Activated naive CD4-positive, alpha-beta T cell treated with anti-CD3 and anti-CD28 coated beads for 36 hours (primary cell): ENCODE measurements at regions of chr4 and their contacts with region 1.

Region 1: GRCh38 chr4:70863099-70863790 is 23.6 kb upstream of the GRSF1 start:
- DNase-seq: peak; percentile 53
- H3K4me3 Mint-ChIP-seq: no peak overlapping the region
- H3K27ac Mint-ChIP-seq: no peak overlapping the region
- H3K4me1 Mint-ChIP-seq: peaks cover 11% of the 10 kb centered on the region
- H3K27me3 Mint-ChIP-seq: no peaks in the 10 kb centered on the region

Region 2: DNA sequence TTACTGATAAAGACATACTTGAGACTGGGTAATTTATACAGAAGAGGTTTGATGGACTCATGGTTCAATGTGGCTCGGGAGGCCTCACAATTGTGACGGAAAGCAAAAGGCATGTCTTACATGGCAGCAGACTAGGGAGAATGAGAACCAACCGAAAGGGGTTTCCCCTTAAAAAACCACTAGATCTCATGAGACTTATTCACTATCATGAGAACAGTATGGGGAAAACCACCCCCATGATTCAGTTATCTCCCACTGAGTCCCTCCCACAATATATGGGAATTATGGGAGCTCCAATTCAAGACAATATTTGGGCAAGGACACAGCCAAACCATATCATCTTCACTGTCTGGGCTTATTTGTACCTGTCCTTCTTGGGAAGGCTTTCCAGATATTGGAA is 414.0 kb before region 1 on chr4:
- CTCF ChIA-PET with region 1: no interaction called
- intact Hi-C with region 1: no loop called
- DNase-seq: no peak
- H3K4me3 Mint-ChIP-seq: no peak overlapping the region
- H3K27ac Mint-ChIP-seq: no peak overlapping the region
- H3K4me1 Mint-ChIP-seq: no peaks in the 10 kb centered on the region
- H3K27me3 Mint-ChIP-seq: no peaks in the 10 kb centered on the region

Region 3: DNA sequence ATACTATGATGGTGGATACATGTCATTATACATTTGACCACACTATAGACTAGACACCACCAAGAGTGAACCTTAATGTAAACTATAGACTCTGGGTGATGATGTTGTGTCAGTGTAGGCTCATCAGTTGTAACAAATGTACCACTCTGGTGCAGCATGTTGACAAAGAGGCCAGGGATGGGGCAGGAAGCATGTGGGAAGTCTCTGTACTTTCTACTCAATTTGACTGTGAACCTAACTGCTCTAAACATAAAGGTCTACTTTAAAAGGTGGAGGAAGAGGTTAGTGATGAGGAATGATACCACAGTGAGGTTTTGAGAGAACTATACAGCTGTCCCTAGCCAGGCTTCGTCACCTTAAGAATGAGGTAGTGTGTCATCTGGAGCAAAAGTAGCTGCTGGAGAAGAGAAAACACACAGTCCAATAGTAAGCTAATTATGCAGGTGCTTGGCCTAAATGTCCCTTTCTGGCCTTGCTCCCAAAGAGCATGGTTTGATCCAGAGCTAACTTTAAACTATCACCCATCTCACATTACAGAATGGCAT is 61.9 kb before region 1 on chr4:
- CTCF ChIA-PET with region 1: no interaction called
- intact Hi-C with region 1: loop called (anchors 1 kb)
- DNase-seq: peak; percentile 51
- H3K4me3 Mint-ChIP-seq: no peak overlapping the region
- H3K27ac Mint-ChIP-seq: no peak overlapping the region
- H3K4me1 Mint-ChIP-seq: peaks cover 21% of the 10 kb centered on the region
- H3K27me3 Mint-ChIP-seq: no peaks in the 10 kb centered on the region

Region 4: GRCh38 chr4:70901984-70902576 is 38.8 kb after region 1 on chr4 and contains the start of gene MOB1B:
- CTCF ChIA-PET with region 1: no interaction called
- intact Hi-C with region 1: loop called (anchors 1 kb)
- DNase-seq: peak; percentile 92
- H3K4me3 Mint-ChIP-seq: peak within 1 kb of the TSS; percentile 88
- H3K27ac Mint-ChIP-seq: peak within 1 kb of the TSS; percentile 54
- H3K4me1 Mint-ChIP-seq: peaks cover 31% of the 10 kb centered on the region
- H3K27me3 Mint-ChIP-seq: no peaks in the 10 kb centered on the region
- total RNA-seq, gene MOB1B: 14.4 to 16.2 TPM

Region 5: DNA sequence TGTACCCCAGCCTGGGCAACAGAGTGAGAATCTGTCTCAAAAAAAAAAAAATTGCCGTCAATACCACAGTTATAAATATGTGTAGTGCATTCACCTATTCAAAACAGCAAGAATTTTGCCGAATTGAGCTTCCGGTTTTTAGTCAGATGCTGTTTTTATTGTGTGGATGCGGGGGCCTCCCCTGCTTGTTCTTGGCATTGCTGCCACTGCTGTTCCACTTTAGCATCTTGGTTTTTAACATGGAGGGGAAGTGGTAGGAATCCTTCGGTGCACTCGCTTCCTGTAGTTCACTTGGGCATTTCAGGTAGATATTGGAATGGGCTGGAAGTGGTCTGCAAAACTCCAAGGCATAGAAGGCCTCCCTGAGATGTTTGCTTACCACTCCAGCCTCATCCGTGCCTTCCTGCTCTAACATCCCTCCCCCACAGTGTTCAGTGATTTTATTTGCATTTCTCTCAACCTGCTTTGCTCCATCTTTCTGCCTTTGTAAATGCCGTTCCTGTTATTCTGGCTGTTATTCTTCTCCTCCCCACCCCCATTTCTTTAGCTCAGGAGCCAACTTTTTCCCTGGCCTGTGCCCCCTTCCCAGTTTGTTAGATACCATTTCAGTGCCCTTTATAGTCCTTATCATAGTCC is 64.4 kb after region 1 on chr4:
- CTCF ChIA-PET with region 1: no interaction called
- intact Hi-C with region 1: loop called (anchors 1 kb)
- DNase-seq: peak; percentile 73
- H3K4me3 Mint-ChIP-seq: peak overlapping the region; percentile 51
- H3K27ac Mint-ChIP-seq: peak overlapping the region; percentile 66
- H3K4me1 Mint-ChIP-seq: peaks cover 28% of the 10 kb centered on the region
- H3K27me3 Mint-ChIP-seq: no peaks in the 10 kb centered on the region

Region 6: GRCh38 chr4:71004281-71004851 is 141.1 kb after region 1 on chr4:
- CTCF ChIA-PET with region 1: no interaction called
- intact Hi-C with region 1: loop called (anchors 1 kb)
- DNase-seq: peak; percentile 82
- H3K4me3 Mint-ChIP-seq: peak overlapping the region; percentile 26
- H3K27ac Mint-ChIP-seq: peak overlapping the region; percentile 1
- H3K4me1 Mint-ChIP-seq: peaks cover 77% of the 10 kb centered on the region
- H3K27me3 Mint-ChIP-seq: no peaks in the 10 kb centered on the region

Region 7: DNA sequence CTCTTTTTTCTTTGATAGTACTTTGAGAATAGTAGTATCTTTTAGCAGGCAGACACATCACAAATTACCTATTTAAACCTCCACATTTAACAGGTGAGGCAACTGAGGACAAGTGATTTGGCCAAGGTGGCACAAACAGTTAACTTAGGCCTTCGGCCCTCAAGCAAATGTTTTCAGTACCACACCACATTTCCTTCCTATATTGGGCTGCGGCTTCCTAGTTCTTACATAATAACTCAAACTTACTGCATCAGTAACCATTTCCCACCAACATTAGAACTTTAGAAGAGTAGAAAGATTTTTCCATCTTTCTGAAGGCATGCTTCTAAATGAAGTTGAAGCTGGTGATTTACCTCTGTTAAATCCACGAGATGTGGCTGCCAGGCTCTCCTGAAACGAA is 412.3 kb after region 1 on chr4:
- CTCF ChIA-PET with region 1: no interaction called
- intact Hi-C with region 1: no loop called
- DNase-seq: no peak
- H3K4me3 Mint-ChIP-seq: no peak overlapping the region
- H3K27ac Mint-ChIP-seq: no peak overlapping the region
- H3K4me1 Mint-ChIP-seq: peaks cover 14% of the 10 kb centered on the region
- H3K27me3 Mint-ChIP-seq: peaks cover 2% of the 10 kb centered on the region